ENCODE measurements at regions of chr15 and their contacts with region 1.

Region 1: DNA sequence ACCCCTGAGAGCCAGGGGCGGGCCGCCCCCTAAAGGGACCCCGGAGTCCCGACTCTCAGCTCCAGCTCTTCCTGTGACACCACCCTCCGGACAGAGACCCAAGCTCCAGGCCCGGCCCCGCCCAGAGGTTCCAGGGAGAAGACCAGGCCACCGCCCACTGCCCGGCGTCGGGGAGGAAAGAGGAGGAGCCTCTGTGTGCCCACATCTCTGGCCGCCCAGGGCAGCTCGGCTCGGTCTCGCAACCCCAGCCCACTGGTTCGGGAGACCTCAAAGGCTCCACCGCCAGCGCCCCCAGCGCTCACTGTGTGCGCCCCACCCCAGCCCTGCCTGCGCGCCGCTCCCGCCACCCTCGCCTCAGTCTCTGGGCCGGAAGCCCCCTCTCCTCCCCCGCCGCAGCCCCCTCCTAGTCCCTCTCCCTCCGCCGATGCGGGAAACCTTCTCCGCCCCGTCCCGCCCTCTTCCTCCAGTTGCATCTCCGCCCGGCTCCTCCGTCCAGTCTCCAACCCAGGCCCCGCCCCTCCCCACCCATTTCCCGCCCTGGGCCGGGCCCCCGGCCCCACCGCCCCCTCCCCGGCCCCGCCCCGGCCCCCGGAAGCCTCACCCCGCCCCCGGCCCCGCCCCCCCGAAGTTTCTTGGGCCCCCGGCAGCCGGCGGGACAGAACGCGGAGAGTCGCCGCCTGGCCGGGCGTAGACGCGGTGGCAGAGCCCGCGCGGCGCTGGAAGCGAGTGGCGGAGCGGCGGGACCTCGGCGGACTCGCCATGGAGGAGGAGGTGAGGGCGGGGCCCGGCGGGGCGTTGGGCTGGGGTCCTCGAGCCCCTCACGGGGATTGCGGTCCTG is at the start of gene PLEKHO2:
- DNase-seq: peak; percentile 99
- H3K4me3 ChIP-seq: peak within 1 kb of the TSS; percentile 97 to 100 (median 99)
- H3K27ac ChIP-seq: peak within 1 kb of the TSS; percentile 94 to 99 (median 98)
- H3K4me1 ChIP-seq: peaks cover 38 to 56% (median 53%) of the 10 kb centered on the region in 4 donors
- H3K27me3 ChIP-seq: no peaks in the 10 kb centered on the region
- CTCF ChIP-seq: peak in 2 of 3 experiments; percentile 17 to 19
- EP300 ChIP-seq: no peak
- POLR2A ChIP-seq: peak; percentile 91
- total RNA-seq, gene PLEKHO2: 41.5 to 103 (median 51.2) TPM

Region 2: DNA sequence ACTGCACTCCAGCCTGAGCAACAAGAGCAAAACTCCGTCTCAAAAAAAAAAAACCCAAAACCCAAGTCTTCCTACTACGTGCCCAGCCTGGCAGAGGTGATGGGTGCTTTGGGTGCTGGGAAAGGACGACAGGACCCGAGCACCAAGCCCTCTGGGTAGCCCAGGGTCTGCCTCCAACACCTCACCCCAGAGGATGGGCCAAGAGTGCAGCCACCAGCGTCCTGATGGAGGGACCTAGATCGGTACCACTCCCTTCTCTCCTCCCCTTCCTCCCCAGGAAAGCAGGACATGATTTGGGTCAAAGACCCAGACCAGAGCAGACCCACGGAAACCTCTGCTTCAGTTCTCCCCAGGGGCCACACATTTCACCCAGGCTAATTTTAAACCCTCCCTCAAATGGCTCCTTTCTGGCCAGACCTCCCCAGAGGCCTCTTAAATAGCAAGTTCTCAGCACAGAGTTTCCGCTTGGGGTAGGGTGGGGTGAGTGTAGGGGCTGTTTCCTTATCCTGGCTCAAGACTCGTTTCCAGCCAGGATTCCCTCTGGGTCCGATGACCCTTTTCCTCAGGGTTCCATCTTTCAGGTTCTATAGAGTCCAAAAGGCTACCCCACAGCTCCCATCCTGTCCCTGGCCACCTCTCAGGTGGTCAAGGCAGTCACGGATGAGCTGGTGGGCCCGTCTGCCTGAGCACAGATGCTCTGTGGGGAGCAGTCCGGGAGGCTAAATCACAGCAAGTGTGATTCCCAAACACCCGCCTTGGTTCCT is 86.6 kb before region 1 on chr15:
- intact Hi-C with region 1: no loop called
- DNase-seq: no peak
- H3K4me3 ChIP-seq: no peak overlapping the region
- H3K27ac ChIP-seq: peak overlapping the region; percentile 84 to 93 (median 88)
- H3K4me1 ChIP-seq: peaks cover 48 to 96% (median 87%) of the 10 kb centered on the region in 4 donors
- H3K27me3 ChIP-seq: no peaks in the 10 kb centered on the region
- CTCF ChIP-seq: no peak
- EP300 ChIP-seq: no peak
- POLR2A ChIP-seq: no peak

Region 3: DNA sequence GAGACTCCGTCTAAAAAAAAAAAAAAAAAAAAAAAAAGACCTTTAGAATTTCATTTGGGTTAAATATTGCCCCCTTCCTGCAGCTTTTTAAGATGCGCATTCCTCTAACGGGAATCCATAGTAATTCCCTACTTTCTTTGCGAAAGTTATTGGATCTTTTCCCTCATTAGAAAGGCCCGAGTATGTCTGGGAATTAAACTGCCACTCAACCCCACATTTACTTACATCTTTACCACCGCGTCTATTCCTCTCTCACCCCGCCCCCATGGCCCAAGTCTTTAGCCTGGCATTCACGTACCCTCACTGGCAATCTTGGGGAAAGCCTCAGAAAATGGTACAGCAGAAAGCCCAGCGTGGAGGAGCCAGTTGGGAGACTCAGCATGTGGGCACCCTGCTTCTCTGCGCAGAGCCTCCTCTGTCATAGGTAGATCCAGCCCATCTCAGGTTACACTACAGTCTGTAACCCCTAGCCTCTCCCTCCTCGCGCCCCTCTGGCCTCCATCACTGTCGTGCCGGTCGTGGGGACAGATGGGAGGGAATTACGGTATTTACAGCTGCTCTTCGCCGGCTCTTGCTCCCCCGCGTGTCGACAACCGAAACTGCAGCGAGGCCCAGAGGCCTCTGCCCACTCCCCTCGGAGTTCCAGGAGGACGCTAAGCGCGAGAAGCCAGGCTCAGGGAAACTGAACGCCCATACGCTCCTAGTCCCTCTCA is 63.8 kb after region 1 on chr15:
- intact Hi-C with region 1: loop called (anchors 5 kb)
- DNase-seq: peak; percentile 95
- H3K4me3 ChIP-seq: peak overlapping the region; percentile 39 to 50 (median 48)
- H3K27ac ChIP-seq: peak overlapping the region in 3 of 4 donors; percentile 30 to 61 (median 38)
- H3K4me1 ChIP-seq: peaks cover 0 to 13% (median 11%) of the 10 kb centered on the region in 4 donors
- H3K27me3 ChIP-seq: no peaks in the 10 kb centered on the region
- CTCF ChIP-seq: peak; percentile 90 to 100 (median 95)
- EP300 ChIP-seq: no peak
- POLR2A ChIP-seq: no peak

Region 4: GRCh38 chr15:65086017-65086679 is 244.7 kb after region 1 on chr15:
- intact Hi-C with region 1: loop called (anchors 10 kb)
- DNase-seq: no peak
- H3K4me3 ChIP-seq: no peak overlapping the region
- H3K27ac ChIP-seq: peak overlapping the region; percentile 91 to 96 (median 95)
- H3K4me1 ChIP-seq: peaks cover 89 to 100% (median 99%) of the 10 kb centered on the region in 4 donors
- H3K27me3 ChIP-seq: no peaks in the 10 kb centered on the region
- CTCF ChIP-seq: peak; percentile 34 to 45 (median 42)
- EP300 ChIP-seq: no peak
- POLR2A ChIP-seq: no peak